ENCODE measurements at regions of chr7 and their contacts with region 1.

Region 1: DNA sequence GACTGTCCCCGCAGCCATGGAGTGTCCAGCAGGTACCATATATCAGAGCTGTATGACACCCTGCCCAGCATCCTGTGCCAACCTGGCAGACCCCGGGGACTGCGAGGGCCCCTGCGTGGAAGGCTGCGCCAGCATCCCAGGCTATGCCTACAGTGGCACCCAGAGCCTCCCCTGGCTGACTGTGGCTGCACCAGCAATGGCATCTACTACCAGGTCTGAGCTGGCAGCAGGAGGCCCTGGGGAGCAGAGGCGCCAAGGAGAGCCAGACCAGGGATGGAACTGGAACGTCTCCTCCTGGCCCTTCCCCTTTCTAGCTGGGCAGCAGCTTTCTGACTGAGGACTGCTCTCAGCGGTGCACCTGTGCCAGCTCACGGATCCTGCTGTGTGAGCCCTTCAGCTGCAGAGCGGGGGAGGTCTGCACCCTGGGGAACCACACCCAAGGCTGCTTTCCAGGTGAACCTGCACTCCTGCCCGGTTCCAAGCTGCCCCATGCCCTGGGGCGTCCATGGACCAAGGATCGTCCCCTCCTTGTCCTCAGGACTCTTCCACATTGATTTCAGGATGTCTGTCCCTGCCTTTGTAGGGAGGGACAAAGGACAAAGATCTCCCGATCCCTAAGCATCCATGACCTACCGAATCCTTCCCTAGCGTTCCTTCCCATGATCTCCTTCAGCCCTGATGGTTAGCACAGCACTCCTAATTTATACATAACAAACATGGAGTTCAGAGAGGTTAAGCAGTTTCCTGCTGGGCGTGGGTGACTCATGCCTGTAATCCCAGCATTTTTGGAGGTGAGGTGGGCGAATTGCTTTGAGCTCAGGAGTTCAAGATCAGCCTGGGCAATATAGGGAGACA is 33.3 kb downstream of the EPHB4 start:
- DNase-seq: no peak
- ATAC-seq: no peak
- H3K4me3 ChIP-seq: no peak overlapping the region
- H3K4me3 Mint-ChIP-seq: no peak overlapping the region
- H3K27ac ChIP-seq: no peak overlapping the region
- H3K27ac Mint-ChIP-seq: no peak overlapping the region
- H3K4me1 ChIP-seq: peaks cover 4 to 5% of the 10 kb centered on the region in 2 donors
- H3K4me1 Mint-ChIP-seq: peaks cover 7% of the 10 kb centered on the region
- H3K27me3 ChIP-seq: no peaks in the 10 kb centered on the region
- H3K27me3 Mint-ChIP-seq: peaks cover 4% of the 10 kb centered on the region
- CTCF ChIP-seq: no peak

Region 2: DNA sequence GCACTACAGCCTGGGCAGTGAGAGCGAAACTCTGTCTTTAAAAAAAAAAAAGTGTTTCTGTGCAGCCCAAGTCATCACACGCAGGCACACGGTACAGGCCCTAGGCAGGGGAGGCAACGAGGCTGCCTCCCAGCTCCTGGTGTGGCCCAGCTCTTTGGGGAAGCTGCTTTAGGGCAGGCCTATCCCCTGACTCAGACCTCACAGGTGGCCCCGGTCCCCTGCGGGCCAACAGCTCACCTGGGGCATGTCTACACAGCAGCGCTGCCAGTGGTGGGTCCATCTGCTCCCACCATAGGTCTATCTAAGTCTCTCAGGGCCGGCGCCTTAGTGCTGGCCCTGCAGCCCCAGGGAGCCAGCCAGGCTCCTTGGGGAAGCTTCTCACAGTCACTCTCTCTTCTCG is 29.2 kb before region 1 on chr7:
- CTCF ChIA-PET with region 1: no interaction called
- POLR2A ChIA-PET with region 1: interaction called, 12 read pairs
- intact Hi-C with region 1: no loop called
- DNase-seq: no peak
- ATAC-seq: no peak
- H3K4me3 ChIP-seq: no peak overlapping the region
- H3K4me3 Mint-ChIP-seq: no peak overlapping the region
- H3K27ac ChIP-seq: no peak overlapping the region
- H3K27ac Mint-ChIP-seq: no peak overlapping the region
- H3K4me1 ChIP-seq: no peaks in the 10 kb centered on the region
- H3K4me1 Mint-ChIP-seq: no peaks in the 10 kb centered on the region
- H3K27me3 ChIP-seq: no peaks in the 10 kb centered on the region
- H3K27me3 Mint-ChIP-seq: peaks cover 15% of the 10 kb centered on the region
- CTCF ChIP-seq: no peak